GM12878 (cell line): ENCODE measurements at regions of chr5 and their contacts with region 1.

Region 1: DNA sequence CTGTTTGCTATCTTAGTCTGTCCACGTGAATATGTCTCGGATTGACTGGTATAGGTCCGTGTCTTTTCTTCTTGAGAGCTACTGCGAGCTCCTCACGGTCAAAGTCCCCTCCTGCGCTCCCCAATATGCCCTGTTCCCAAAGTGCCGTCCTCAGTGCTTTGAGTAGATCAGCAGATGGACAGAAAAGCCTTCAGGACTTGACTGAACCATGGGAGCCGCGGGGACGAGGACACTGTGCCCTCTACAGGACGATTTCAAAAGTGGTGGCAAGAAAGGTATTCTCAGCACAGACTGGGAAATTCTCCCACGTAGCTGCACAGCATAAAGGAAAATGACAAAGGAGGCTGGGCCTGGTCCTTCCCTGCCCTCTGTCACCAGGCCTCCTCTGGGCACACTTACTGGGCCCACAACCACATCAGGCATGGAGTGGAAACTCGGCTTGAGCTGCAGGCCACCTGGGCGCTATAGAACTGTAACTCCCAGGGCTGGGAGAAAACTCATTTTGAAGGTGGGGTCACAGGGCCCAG is 16.6 kb upstream of the MTMR12 start:
- DNase-seq: no peak
- ATAC-seq: peak; percentile 96
- H3K4me3 ChIP-seq: no peak overlapping the region
- H3K27ac ChIP-seq: no peak overlapping the region
- H3K4me1 ChIP-seq: peaks cover 7% of the 10 kb centered on the region; the same call in 1 of the 2 replicates
- H3K27me3 ChIP-seq: no peaks in the 10 kb centered on the region
- CTCF ChIP-seq: peak; percentile 79 to 89 (median 85)
- EP300 ChIP-seq: no peak
- POLR2A ChIP-seq: no peak
- RAD21 ChIP-seq: peak; percentile 94

Region 2: DNA sequence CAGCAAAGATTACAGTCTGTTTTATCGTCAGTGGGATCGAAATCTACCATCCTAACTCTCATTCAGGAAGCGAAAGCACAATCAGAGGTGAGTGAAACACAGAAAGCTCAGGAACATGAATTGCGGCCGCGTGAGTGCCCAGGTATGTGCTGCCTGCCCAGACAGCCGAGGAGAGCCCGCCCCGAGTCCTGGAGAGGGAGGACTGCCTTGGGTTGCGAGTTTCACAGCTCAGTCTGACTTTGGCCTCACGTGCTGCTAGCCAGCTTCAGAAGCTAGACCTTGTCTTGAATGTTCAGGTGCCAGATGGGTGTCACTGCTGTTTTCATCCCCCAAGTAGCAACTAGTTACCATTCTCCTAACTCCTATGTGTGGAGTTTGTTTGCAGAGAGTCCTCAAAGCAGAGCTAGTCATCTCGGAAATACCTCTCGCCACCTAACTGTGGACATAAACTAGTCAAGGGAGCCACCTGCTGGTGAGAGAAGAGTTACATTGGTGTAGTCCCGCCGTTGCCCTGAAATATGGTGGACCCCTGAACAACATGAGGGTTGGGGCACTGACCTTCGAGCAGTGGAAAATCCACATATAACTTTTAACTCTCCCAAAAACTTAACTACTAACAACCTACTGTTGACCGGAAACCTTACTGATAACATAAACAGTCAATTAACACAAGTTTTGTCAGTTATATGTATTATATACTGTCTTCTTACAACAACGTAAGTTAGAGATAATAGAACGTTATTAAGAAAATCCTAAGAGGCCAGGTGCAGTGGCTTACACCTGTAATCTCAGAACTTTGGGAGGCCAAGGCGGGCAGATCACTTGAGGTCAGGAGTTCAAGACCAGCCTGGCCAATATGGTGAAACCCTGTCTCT is 236.2 kb before region 1 on chr5:
- CTCF ChIA-PET with region 1: interaction called, 13 read pairs
- POLR2A ChIA-PET with region 1: no interaction called
- RAD21 ChIA-PET with region 1: interaction called, 4 read pairs
- SMC1A ChIA-PET with region 1: interaction called, 3 read pairs
- in situ Hi-C with region 1: no loop called
- intact Hi-C with region 1: loop called (anchors 5 kb)
- DNase-seq: peak; percentile 17
- ATAC-seq: peak; percentile 99
- H3K4me3 ChIP-seq: no peak overlapping the region
- H3K27ac ChIP-seq: no peak overlapping the region
- H3K4me1 ChIP-seq: no peaks in the 10 kb centered on the region
- H3K27me3 ChIP-seq: no peaks in the 10 kb centered on the region
- CTCF ChIP-seq: peak; percentile 67 to 83 (median 75)
- EP300 ChIP-seq: no peak
- POLR2A ChIP-seq: no peak
- RAD21 ChIP-seq: peak; percentile 77

Region 3: GRCh38 chr5:32225445-32225844 is 103.9 kb before region 1 on chr5:
- CTCF ChIA-PET with region 1: interaction called, 339 read pairs
- POLR2A ChIA-PET with region 1: interaction called, 4 read pairs
- RAD21 ChIA-PET with region 1: interaction called, 172 read pairs
- SMC1A ChIA-PET with region 1: interaction called, 153 read pairs
- in situ Hi-C with region 1: loop called (anchors 5 kb)
- intact Hi-C with region 1: no loop called
- DNase-seq: no peak
- ATAC-seq: no peak
- H3K4me3 ChIP-seq: no peak overlapping the region
- H3K27ac ChIP-seq: no peak overlapping the region
- H3K4me1 ChIP-seq: no peaks in the 10 kb centered on the region
- H3K27me3 ChIP-seq: no peaks in the 10 kb centered on the region
- CTCF ChIP-seq: no peak
- EP300 ChIP-seq: no peak
- POLR2A ChIP-seq: no peak
- RAD21 ChIP-seq: no peak

Region 4: GRCh38 chr5:32241034-32241783 is 88.2 kb before region 1 on chr5:
- CTCF ChIA-PET with region 1: interaction called, 339 read pairs
- POLR2A ChIA-PET with region 1: no interaction called
- RAD21 ChIA-PET with region 1: interaction called, 4 read pairs
- SMC1A ChIA-PET with region 1: interaction called, 23 read pairs
- in situ Hi-C with region 1: no loop called
- intact Hi-C with region 1: no loop called
- DNase-seq: no peak
- ATAC-seq: no peak
- H3K4me3 ChIP-seq: no peak overlapping the region
- H3K27ac ChIP-seq: no peak overlapping the region
- H3K4me1 ChIP-seq: no peaks in the 10 kb centered on the region
- H3K27me3 ChIP-seq: no peaks in the 10 kb centered on the region
- CTCF ChIP-seq: no peak
- EP300 ChIP-seq: no peak
- POLR2A ChIP-seq: no peak
- RAD21 ChIP-seq: no peak

Region 5: DNA sequence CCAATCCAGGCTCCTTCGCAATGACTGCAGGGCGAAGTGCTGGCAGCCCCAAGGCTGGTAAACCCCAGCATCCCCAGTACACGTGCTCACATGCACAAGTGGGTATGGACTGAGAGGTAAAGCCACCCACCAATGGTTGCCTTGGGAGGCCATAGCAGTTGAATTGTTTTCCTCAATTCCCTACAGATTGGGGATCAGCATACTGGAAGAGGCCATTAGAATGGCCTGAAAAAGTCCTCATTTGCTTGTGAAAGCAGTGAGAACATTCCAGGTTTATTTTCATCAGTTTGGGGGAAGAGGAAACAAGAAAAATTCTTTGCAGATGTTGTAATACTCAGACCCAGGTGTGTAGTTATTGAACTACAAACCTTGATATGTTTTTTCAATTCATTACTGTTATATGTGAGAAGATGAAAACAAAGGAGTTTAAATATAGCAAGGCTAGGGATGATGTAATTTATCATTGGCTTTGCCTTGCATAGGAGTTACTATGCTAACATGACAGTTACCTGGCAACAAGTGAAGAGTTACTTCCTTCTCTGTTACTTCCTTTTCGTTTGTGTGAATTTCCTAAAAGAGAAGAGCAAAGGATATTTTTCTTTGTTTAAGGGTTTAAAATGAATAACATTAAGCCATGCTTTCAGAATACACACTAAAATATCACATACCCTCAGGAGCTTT is 53.1 kb before region 1 on chr5:
- CTCF ChIA-PET with region 1: interaction called, 31 read pairs
- POLR2A ChIA-PET with region 1: no interaction called
- RAD21 ChIA-PET with region 1: interaction called, 18 read pairs
- SMC1A ChIA-PET with region 1: interaction called, 19 read pairs
- in situ Hi-C with region 1: no loop called
- intact Hi-C with region 1: loop called (anchors 5 kb)
- DNase-seq: no peak
- ATAC-seq: peak; percentile 63
- H3K4me3 ChIP-seq: no peak overlapping the region
- H3K27ac ChIP-seq: peak overlapping the region; percentile 19; the same call in 1 of the 2 replicates
- H3K4me1 ChIP-seq: peaks cover 39% of the 10 kb centered on the region
- H3K27me3 ChIP-seq: no peaks in the 10 kb centered on the region
- CTCF ChIP-seq: no peak
- EP300 ChIP-seq: no peak
- POLR2A ChIP-seq: no peak
- RAD21 ChIP-seq: no peak

Region 6: GRCh38 chr5:32365623-32366022 is 36.3 kb after region 1 on chr5:
- CTCF ChIA-PET with region 1: interaction called, 11 read pairs
- POLR2A ChIA-PET with region 1: no interaction called
- RAD21 ChIA-PET with region 1: no interaction called
- SMC1A ChIA-PET with region 1: interaction called, 7 read pairs
- in situ Hi-C with region 1: no loop called
- intact Hi-C with region 1: no loop called
- DNase-seq: no peak
- ATAC-seq: no peak
- H3K4me3 ChIP-seq: no peak overlapping the region
- H3K27ac ChIP-seq: no peak overlapping the region
- H3K4me1 ChIP-seq: no peaks in the 10 kb centered on the region
- H3K27me3 ChIP-seq: no peaks in the 10 kb centered on the region
- CTCF ChIP-seq: no peak
- EP300 ChIP-seq: no peak
- POLR2A ChIP-seq: no peak
- RAD21 ChIP-seq: no peak